B cell (primary cell): ENCODE measurements at regions of chr17 and their contacts with region 1.

Region 1: DNA sequence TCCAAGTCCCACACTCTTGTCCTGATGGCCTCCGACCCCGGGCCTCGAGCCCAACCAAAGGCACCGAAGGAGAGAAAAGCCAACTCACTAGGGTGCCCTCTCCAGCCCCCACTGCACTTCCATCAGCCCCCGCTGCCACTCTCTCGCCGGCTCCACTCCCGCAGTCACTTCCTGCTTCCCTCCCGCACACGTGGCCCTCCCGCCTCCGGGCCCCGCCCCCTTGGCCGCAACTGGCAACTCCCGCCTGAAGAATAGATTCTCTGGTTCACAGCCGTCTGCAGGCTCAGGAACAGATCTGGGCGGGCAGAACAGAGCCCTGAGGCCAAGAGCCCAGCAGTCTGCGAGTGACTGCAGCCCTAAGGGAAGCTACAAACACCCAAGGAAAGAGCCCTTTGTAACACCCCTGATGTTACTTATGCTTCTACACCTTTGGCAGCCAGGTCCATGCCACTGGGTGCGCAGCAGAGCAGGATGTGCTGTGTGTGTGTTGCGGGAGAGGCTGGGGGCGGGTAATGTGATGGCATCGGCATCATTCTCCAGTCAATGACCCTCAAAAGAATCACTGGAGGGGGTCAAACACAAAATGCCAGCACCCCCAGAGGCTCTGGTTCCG is at the start of gene SLC39A11:
- DNase-seq: peak; percentile 91
- ATAC-seq: peak; percentile 99
- H3K4me3 ChIP-seq: peak within 1 kb of the TSS; percentile 30 to 80 (median 71)
- H3K4me3 Mint-ChIP-seq: peak within 1 kb of the TSS; percentile 91
- H3K27ac ChIP-seq: peak within 1 kb of the TSS in 1 of 2 donors; percentile 45
- H3K27ac Mint-ChIP-seq: peak within 1 kb of the TSS; percentile 80
- H3K4me1 ChIP-seq: peaks cover 7 to 16% of the 10 kb centered on the region in 2 donors
- H3K4me1 Mint-ChIP-seq: peaks cover 39% of the 10 kb centered on the region
- H3K27me3 ChIP-seq: peaks cover 0 to 8% (median under 1%) of the 10 kb centered on the region in 4 experiments
- H3K27me3 Mint-ChIP-seq: peaks cover 12% of the 10 kb centered on the region
- CTCF ChIP-seq: no peak
- total RNA-seq, gene SLC39A11: 35.5 and 39.6 TPM in 2 replicates

Region 2: GRCh38 chr17:72916991-72917390 is 175.6 kb before region 1 on chr17:
- CTCF ChIA-PET with region 1: no interaction called
- POLR2A ChIA-PET with region 1: interaction called, 11 read pairs
- intact Hi-C with region 1: no loop called
- DNase-seq: no peak
- ATAC-seq: no peak
- H3K4me3 ChIP-seq: no peak overlapping the region
- H3K4me3 Mint-ChIP-seq: no peak overlapping the region
- H3K27ac ChIP-seq: no peak overlapping the region
- H3K27ac Mint-ChIP-seq: no peak overlapping the region
- H3K4me1 ChIP-seq: no peaks in the 10 kb centered on the region
- H3K4me1 Mint-ChIP-seq: no peaks in the 10 kb centered on the region
- H3K27me3 ChIP-seq: no peaks in the 10 kb centered on the region
- H3K27me3 Mint-ChIP-seq: no peaks in the 10 kb centered on the region
- CTCF ChIP-seq: no peak

Region 3: DNA sequence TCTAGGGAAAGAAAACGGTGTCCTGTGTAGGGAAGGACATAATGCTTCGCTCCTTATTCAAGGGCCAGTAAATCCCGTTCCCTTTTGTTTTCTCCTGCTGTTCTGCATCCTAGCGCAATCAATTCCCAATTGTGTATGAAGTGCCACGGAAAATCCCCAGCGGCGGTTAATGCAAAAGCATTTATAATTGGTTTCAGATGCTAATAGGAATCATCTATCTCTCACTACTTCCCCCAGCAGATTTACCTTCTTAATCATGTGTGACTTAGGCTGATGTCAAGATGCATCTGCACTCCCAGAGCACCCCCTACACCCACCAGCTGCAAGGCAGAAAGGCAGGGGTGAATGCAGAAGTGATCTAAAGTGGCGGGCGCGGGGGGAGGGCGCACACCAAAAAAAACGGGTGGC is 39.5 kb after region 1 on chr17:
- CTCF ChIA-PET with region 1: no interaction called
- POLR2A ChIA-PET with region 1: interaction called, 6 read pairs
- intact Hi-C with region 1: loop called (anchors 1 kb)
- DNase-seq: peak; percentile 86
- ATAC-seq: peak; percentile 97
- H3K4me3 ChIP-seq: no peak overlapping the region
- H3K4me3 Mint-ChIP-seq: peak overlapping the region; percentile 69
- H3K27ac ChIP-seq: no peak overlapping the region
- H3K27ac Mint-ChIP-seq: peak overlapping the region; percentile 38
- H3K4me1 ChIP-seq: peaks cover 9 to 19% of the 10 kb centered on the region in 2 donors
- H3K4me1 Mint-ChIP-seq: peaks cover 15% of the 10 kb centered on the region
- H3K27me3 ChIP-seq: peaks cover 0 to 8% (median 2%) of the 10 kb centered on the region in 4 experiments
- H3K27me3 Mint-ChIP-seq: peaks cover 5% of the 10 kb centered on the region
- CTCF ChIP-seq: no peak

Region 4: GRCh38 chr17:73156166-73156840 is 63.7 kb after region 1 on chr17:
- CTCF ChIA-PET with region 1: no interaction called
- POLR2A ChIA-PET with region 1: no interaction called
- intact Hi-C with region 1: loop called (anchors 1 kb)
- DNase-seq: peak; percentile 61
- ATAC-seq: peak; percentile 67
- H3K4me3 ChIP-seq: no peak overlapping the region
- H3K4me3 Mint-ChIP-seq: no peak overlapping the region
- H3K27ac ChIP-seq: no peak overlapping the region
- H3K27ac Mint-ChIP-seq: no peak overlapping the region
- H3K4me1 ChIP-seq: peaks cover 5 to 13% of the 10 kb centered on the region in 2 donors
- H3K4me1 Mint-ChIP-seq: peaks cover 11% of the 10 kb centered on the region
- H3K27me3 ChIP-seq: peaks cover 0 to 30% (median 8%) of the 10 kb centered on the region in 4 experiments
- H3K27me3 Mint-ChIP-seq: peaks cover 31% of the 10 kb centered on the region
- CTCF ChIP-seq: peak; percentile 84

Region 5: GRCh38 chr17:73192894-73193701 is 100.5 kb after region 1 on chr17 and contains the start of gene COG1:
- CTCF ChIA-PET with region 1: no interaction called
- POLR2A ChIA-PET with region 1: no interaction called
- intact Hi-C with region 1: loop called (anchors 1 kb)
- DNase-seq: peak; percentile 94
- ATAC-seq: peak; percentile 88
- H3K4me3 ChIP-seq: peak within 1 kb of the TSS; percentile 63 to 94 (median 85)
- H3K4me3 Mint-ChIP-seq: peak within 1 kb of the TSS; percentile 96
- H3K27ac ChIP-seq: peak within 1 kb of the TSS; percentile 72 to 77
- H3K27ac Mint-ChIP-seq: peak within 1 kb of the TSS; percentile 93
- H3K4me1 ChIP-seq: peaks cover 11 to 21% of the 10 kb centered on the region in 2 donors
- H3K4me1 Mint-ChIP-seq: peaks cover 27% of the 10 kb centered on the region
- H3K27me3 ChIP-seq: no peaks in the 10 kb centered on the region
- H3K27me3 Mint-ChIP-seq: no peaks in the 10 kb centered on the region
- CTCF ChIP-seq: no peak
- total RNA-seq, gene COG1: 64.7 and 72.8 TPM in 2 replicates

Region 6: GRCh38 chr17:73311781-73312641 is 219.4 kb after region 1 on chr17 and contains the start of gene CDC42EP4:
- CTCF ChIA-PET with region 1: no interaction called
- POLR2A ChIA-PET with region 1: no interaction called
- intact Hi-C with region 1: loop called (anchors 2 kb)
- DNase-seq: peak; percentile 83
- ATAC-seq: peak; percentile 90
- H3K4me3 ChIP-seq: peak within 1 kb of the TSS; percentile 60 to 74 (median 68)
- H3K4me3 Mint-ChIP-seq: peak within 1 kb of the TSS; percentile 94
- H3K27ac ChIP-seq: peak within 1 kb of the TSS; percentile 12 to 70
- H3K27ac Mint-ChIP-seq: peak within 1 kb of the TSS; percentile 61
- H3K4me1 ChIP-seq: peaks cover 19 to 30% of the 10 kb centered on the region in 2 donors
- H3K4me1 Mint-ChIP-seq: peaks cover 21% of the 10 kb centered on the region
- H3K27me3 ChIP-seq: peaks cover 0 to 16% (median 4%) of the 10 kb centered on the region in 4 experiments
- H3K27me3 Mint-ChIP-seq: no peaks in the 10 kb centered on the region
- CTCF ChIP-seq: no peak
- total RNA-seq, gene CDC42EP4: 0.66 and 2.0 TPM in 2 replicates

Region 7: DNA sequence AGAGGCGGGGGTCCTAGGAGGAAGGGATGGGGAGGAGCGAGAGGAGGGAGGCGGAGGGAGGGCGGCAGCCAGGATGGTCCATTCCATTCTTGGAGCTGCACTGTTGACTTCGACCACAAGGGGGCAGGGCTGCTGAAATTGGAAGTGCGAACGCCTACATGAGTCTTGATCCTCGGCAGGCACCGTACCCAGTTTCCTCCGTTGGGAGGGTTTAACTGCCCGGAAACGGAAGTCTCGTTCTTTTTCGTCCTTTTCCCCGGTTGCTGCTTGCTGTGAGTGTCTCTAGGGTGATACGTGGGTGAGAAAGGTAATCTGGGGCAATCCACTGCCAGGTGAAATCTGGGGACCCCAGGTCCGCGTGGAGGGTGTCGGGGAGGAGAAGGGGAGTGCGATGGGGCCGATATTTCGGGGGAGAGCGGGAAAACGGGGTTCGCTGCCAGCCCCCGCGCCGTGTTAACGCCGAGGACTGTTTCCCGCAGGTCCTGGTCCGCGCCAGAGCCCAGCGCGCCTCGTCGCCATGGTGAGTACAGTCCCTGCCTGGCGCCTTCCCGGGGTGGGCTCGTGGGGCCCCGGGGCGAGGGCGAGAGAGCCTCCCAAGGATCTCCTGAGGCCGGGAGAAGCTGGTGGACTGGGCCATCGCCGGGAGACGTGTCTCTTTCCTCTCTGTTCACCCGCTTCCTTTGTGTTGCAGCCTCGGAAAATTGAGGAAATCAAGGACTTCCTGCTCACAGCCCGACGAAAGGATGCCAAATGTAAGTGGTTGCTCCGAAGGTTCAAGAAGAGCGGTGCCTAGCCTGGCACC is 1111.0 kb after region 1 on chr17 and contains the start of gene RPL38:
- CTCF ChIA-PET with region 1: no interaction called
- POLR2A ChIA-PET with region 1: no interaction called
- intact Hi-C with region 1: loop called (anchors 5 kb)
- DNase-seq: peak; percentile 96
- ATAC-seq: peak; percentile 98
- H3K4me3 ChIP-seq: peak within 1 kb of the TSS; percentile 90 to 94 (median 91)
- H3K4me3 Mint-ChIP-seq: peak within 1 kb of the TSS; percentile 98
- H3K27ac ChIP-seq: peak within 1 kb of the TSS; percentile 70 to 85
- H3K27ac Mint-ChIP-seq: peak within 1 kb of the TSS; percentile 94
- H3K4me1 ChIP-seq: peaks cover 34 to 40% of the 10 kb centered on the region in 2 donors
- H3K4me1 Mint-ChIP-seq: peaks cover 33% of the 10 kb centered on the region
- H3K27me3 ChIP-seq: peaks cover 0 to 40% (median 8%) of the 10 kb centered on the region in 4 experiments
- H3K27me3 Mint-ChIP-seq: peaks cover 29% of the 10 kb centered on the region
- CTCF ChIP-seq: peak; percentile 84
- total RNA-seq, gene RPL38: 1,416 and 1,550 TPM in 2 replicates